Common myeloid progenitor, CD34-positive (primary cell): ENCODE measurements at regions of chr7 and their contacts with region 1.

Region 1: DNA sequence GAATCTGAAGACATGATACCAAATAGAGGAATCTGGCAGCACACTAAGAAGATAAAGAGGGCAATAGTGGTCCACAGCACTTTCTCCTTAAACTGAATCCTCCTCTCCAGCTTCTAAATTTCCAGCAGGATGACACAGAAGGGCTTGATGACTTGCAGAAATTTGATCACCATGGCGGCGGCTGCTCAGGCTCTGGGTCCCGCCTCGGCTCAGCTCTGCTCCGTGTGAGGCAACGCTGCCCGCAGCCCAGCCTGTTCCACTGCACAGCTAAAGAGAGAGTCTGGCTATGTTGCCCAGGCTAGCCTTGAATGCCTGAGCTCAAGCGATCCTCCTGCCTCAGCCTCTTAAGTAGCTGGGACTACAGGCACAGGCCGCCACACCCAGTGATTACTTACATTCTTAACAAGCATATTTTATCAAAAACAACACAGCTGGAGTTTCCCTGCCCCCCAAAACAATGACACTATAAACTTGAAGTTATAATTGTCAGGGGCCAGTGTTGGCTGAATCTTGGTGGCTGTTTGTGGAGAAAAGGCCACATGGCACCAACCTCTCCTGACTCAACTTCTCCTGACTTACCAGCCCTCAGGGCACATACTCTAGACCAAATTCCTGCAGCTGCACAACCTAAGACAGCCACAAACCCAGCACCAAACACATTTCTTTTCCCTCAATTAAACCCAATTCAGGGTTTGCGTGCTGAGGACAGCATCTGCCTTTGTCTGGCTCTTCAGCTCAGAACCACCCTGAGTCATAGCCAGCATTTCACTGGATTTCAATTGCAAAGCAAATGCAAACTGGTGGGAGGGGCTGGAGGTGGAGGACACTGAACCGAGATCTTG is 11.6 kb upstream of the TNPO3 start:
- DNase-seq: peak in 1 of 3 donors; percentile 26
- H3K4me3 ChIP-seq: no peak overlapping the region
- H3K27ac ChIP-seq: peak overlapping the region in 1 of 2 experiments; percentile 75
- H3K4me1 ChIP-seq: peaks cover 4 to 31% (median 12%) of the 10 kb centered on the region in 4 experiments
- H3K27me3 ChIP-seq: peaks cover 0 to 2% (median 0%) of the 10 kb centered on the region in 5 experiments

Region 2: DNA sequence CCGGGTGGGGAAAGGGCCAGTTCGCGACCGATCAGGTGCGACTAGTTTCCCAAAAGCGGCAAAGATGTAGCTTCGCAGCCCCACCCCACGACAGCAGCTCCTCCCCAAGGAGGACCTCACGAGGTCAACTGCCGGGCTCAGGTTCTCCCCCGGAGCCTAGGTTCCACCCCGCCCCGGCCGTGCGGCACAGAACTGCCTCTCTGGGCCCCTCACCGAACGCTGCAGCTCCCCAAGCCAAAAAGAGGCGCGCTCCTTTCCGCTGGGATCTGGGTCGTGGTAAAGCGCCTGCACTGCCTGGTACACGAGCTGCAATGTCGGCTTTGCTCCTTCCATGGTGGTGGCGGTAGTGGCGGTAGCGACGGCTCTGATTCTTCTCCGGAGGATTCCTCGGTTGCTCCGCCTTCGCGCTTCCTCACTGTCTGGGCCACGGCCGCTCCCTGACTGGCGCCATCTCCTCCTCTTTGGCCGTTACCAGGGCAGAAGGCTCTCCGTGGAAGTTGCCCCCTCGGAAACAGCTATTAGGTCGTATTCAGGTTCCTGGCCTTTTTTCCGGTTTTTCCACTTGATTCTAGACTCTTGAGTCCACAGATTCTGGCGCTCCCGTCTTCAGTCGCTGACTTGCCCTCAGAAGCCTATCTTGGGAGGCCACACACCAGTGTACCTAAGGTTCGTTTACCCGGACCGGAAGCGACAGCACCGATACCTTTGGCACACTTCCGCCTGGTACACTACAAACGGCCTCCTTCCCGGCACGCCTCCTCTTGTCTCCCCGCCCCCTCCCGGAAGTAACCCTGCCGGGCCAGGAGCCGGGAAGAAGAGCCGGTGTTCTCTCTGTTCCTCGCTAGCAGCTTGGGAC is 11.8 kb before region 1 on chr7 and contains the start of gene TNPO3:
- CTCF ChIA-PET with region 1: interaction called, 5 read pairs
- POLR2A ChIA-PET with region 1: interaction called, 10 read pairs
- DNase-seq: peak; percentile 91 to 95 (median 93)
- H3K4me3 ChIP-seq: peak within 1 kb of the TSS; percentile 75 to 99 (median 94)
- H3K27ac ChIP-seq: peak within 1 kb of the TSS; percentile 100
- H3K4me1 ChIP-seq: peaks cover 13 to 26% (median 16%) of the 10 kb centered on the region in 4 experiments
- H3K27me3 ChIP-seq: peaks cover 0 to 1% (median 0%) of the 10 kb centered on the region in 5 experiments

Region 3: GRCh38 chr7:129078455-129078854 is 11.9 kb after region 1 on chr7:
- CTCF ChIA-PET with region 1: interaction called, 18 read pairs
- POLR2A ChIA-PET with region 1: interaction called, 5 read pairs
- DNase-seq: no peak
- H3K4me3 ChIP-seq: no peak overlapping the region
- H3K27ac ChIP-seq: no peak overlapping the region
- H3K4me1 ChIP-seq: peaks cover 0 to 3% (median under 1%) of the 10 kb centered on the region in 4 experiments
- H3K27me3 ChIP-seq: no peaks in the 10 kb centered on the region

Region 4: GRCh38 chr7:129136887-129137642 is 70.6 kb after region 1 on chr7:
- CTCF ChIA-PET with region 1: no interaction called
- POLR2A ChIA-PET with region 1: no interaction called
- DNase-seq: peak; percentile 54 to 86 (median 77)
- H3K4me3 ChIP-seq: peak overlapping the region in 2 of 7 experiments; percentile 17 to 41
- H3K27ac ChIP-seq: peak overlapping the region in 1 of 2 experiments; percentile 64
- H3K4me1 ChIP-seq: peaks cover 11 to 33% (median 26%) of the 10 kb centered on the region in 4 experiments
- H3K27me3 ChIP-seq: no peaks in the 10 kb centered on the region